CD8-positive, alpha-beta T cell (primary cell): ENCODE measurements at regions of chr12 and their contacts with region 1.

Region 1: DNA sequence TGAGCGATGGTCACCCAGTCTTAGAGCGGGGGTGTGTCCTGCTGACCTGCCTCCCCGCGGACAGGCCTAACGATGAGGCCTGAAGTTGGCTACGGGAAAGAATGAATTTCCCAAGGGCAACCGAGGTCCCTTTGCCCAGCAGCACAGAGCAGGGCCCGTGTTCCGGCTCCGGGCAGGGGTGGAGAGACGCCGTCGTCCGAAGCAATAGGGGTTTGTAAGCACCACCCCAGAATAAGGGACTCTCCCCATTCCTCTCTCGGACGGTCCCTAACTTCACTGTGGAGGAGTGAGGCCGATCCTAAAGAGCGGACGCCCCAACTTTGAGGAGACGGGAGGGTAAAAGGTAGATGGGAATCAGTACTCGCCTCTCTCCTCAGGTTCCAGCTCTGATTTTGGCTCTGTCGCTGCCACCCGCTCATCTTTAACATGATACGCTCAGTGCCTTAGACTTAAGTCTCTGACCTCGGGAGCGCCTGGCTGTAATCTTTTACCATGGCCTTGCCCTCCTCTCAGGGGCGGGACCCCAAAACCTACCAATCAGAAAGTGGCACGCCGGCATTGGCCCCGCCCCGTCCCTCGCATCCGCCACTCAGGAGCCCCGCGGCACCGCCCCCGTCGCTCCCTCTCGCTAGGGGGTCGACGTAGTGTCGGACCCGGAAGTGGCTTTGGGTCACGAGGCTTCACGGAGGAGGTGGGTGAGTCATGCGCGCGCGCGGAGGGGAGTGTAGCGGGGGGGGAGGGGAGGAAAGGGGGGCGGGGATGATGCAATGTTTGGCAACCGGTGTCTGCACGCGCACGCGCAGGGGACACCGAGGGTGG is at the start of gene DDIT3:
- DNase-seq: peak; percentile 99 to 100 (median 100)
- ATAC-seq: peak; percentile 76
- H3K4me3 ChIP-seq: peak within 1 kb of the TSS; percentile 83 to 94
- H3K4me3 Mint-ChIP-seq: peak within 1 kb of the TSS; percentile 98
- H3K27ac ChIP-seq: peak within 1 kb of the TSS; percentile 97 to 100
- H3K27ac Mint-ChIP-seq: peak within 1 kb of the TSS; percentile 100
- H3K4me1 ChIP-seq: peaks cover 53% of the 10 kb centered on the region
- H3K4me1 Mint-ChIP-seq: peaks cover 54% of the 10 kb centered on the region
- H3K27me3 ChIP-seq: no peaks in the 10 kb centered on the region
- H3K27me3 Mint-ChIP-seq: no peaks in the 10 kb centered on the region
- CTCF ChIP-seq: no peak
- total RNA-seq, gene DDIT3: 137 to 143 TPM

Region 2: GRCh38 chr12:56688129-56688845 is 832.0 kb before region 1 on chr12 and contains the start of gene PTGES3:
- CTCF ChIA-PET with region 1: no interaction called
- POLR2A ChIA-PET with region 1: no interaction called
- intact Hi-C with region 1: no loop called
- DNase-seq: peak; percentile 94 to 99 (median 97)
- ATAC-seq: peak; percentile 69
- H3K4me3 ChIP-seq: peak within 1 kb of the TSS; percentile 75 to 99
- H3K4me3 Mint-ChIP-seq: peak within 1 kb of the TSS; percentile 98
- H3K27ac ChIP-seq: peak within 1 kb of the TSS; percentile 97 to 98
- H3K27ac Mint-ChIP-seq: peak within 1 kb of the TSS; percentile 99
- H3K4me1 ChIP-seq: peaks cover 35% of the 10 kb centered on the region
- H3K4me1 Mint-ChIP-seq: peaks cover 34% of the 10 kb centered on the region
- H3K27me3 ChIP-seq: no peaks in the 10 kb centered on the region
- H3K27me3 Mint-ChIP-seq: no peaks in the 10 kb centered on the region
- CTCF ChIP-seq: no peak
- total RNA-seq, gene PTGES3: 148 to 154 TPM

Region 3: GRCh38 chr12:57088459-57089248 is 431.6 kb before region 1 on chr12 and contains the start of gene NAB2:
- CTCF ChIA-PET with region 1: no interaction called
- POLR2A ChIA-PET with region 1: no interaction called
- intact Hi-C with region 1: loop called in 1 of 2 experiments (anchors 2 kb)
- DNase-seq: peak; percentile 87 to 97 (median 95)
- ATAC-seq: peak; percentile 60
- H3K4me3 ChIP-seq: peak within 1 kb of the TSS; percentile 87 to 95
- H3K4me3 Mint-ChIP-seq: peak within 1 kb of the TSS; percentile 92
- H3K27ac ChIP-seq: peak within 1 kb of the TSS; percentile 97 to 100
- H3K27ac Mint-ChIP-seq: peak within 1 kb of the TSS; percentile 95
- H3K4me1 ChIP-seq: peaks cover 47% of the 10 kb centered on the region
- H3K4me1 Mint-ChIP-seq: peaks cover 64% of the 10 kb centered on the region
- H3K27me3 ChIP-seq: no peaks in the 10 kb centered on the region
- H3K27me3 Mint-ChIP-seq: no peaks in the 10 kb centered on the region
- CTCF ChIP-seq: no peak
- total RNA-seq, gene NAB2: 5.9 to 6.7 TPM

Region 4: GRCh38 chr12:57430931-57431720 is 89.1 kb before region 1 on chr12 and contains the start of gene R3HDM2:
- CTCF ChIA-PET with region 1: no interaction called
- POLR2A ChIA-PET with region 1: no interaction called
- intact Hi-C with region 1: loop called (anchors 1 to 2 kb)
- DNase-seq: peak; percentile 91 to 98 (median 96)
- ATAC-seq: peak; percentile 91
- H3K4me3 ChIP-seq: peak within 1 kb of the TSS; percentile 51 to 59
- H3K4me3 Mint-ChIP-seq: peak within 1 kb of the TSS; percentile 98
- H3K27ac ChIP-seq: peak within 1 kb of the TSS; percentile 87 to 96
- H3K27ac Mint-ChIP-seq: peak within 1 kb of the TSS; percentile 100
- H3K4me1 ChIP-seq: peaks cover 26% of the 10 kb centered on the region
- H3K4me1 Mint-ChIP-seq: peaks cover 45% of the 10 kb centered on the region
- H3K27me3 ChIP-seq: no peaks in the 10 kb centered on the region
- H3K27me3 Mint-ChIP-seq: no peaks in the 10 kb centered on the region
- CTCF ChIP-seq: no peak
- total RNA-seq, gene R3HDM2: 93.2 to 103 TPM

Region 5: DNA sequence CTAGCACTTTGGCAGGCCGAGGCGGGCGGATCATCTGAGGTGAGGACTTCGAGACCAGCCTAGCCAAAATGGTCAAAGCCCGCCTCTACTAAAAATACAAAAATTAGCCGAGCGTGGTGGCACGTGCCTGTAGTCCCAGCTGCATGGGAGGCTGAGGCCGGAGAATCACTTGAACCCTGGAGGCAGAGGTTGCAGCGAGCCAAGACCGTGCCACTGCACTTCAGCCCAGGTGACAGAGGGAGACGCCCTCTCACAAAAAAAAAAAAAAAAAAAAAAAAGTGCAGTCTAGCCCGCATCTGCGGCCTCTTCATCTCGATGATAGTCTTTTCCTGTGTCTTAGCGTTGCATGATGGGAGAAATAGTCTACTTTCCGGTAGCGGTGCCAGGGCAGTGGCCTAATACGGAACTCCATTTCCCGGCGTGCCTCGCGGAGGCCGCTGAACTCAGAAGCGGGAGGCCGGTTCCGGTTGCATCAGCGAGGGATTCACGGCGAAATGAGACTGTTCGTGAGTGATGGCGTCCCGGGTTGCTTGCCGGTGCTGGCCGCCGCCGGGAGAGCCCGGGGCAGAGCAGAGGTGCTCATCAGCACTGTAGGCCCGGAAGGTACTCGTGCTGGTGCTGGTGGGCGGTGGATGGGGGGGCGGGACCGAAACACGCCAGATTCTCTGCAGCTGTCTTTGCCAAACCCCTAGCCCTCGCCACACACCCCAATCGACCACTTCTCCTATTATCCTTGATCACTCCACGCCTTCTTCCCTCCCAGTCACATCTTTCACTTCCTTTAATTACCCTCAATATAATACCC is 32.5 kb before region 1 on chr12 and contains the start of gene MARS1:
- CTCF ChIA-PET with region 1: no interaction called
- POLR2A ChIA-PET with region 1: interaction called, 3 read pairs
- intact Hi-C with region 1: loop called (anchors 1 kb)
- DNase-seq: peak; percentile 78 to 98 (median 92)
- ATAC-seq: peak; percentile 94
- H3K4me3 ChIP-seq: peak within 1 kb of the TSS; percentile 66 to 85
- H3K4me3 Mint-ChIP-seq: peak within 1 kb of the TSS; percentile 93
- H3K27ac ChIP-seq: peak within 1 kb of the TSS; percentile 61 to 85
- H3K27ac Mint-ChIP-seq: peak within 1 kb of the TSS; percentile 94
- H3K4me1 ChIP-seq: peaks cover 19% of the 10 kb centered on the region
- H3K4me1 Mint-ChIP-seq: peaks cover 36% of the 10 kb centered on the region
- H3K27me3 ChIP-seq: no peaks in the 10 kb centered on the region
- H3K27me3 Mint-ChIP-seq: no peaks in the 10 kb centered on the region
- CTCF ChIP-seq: no peak
- total RNA-seq, gene MARS1: 213 to 226 TPM

Region 6: GRCh38 chr12:57498132-57498502 is 22.1 kb before region 1 on chr12:
- CTCF ChIA-PET with region 1: no interaction called
- POLR2A ChIA-PET with region 1: no interaction called
- intact Hi-C with region 1: no loop called
- DNase-seq: no peak
- ATAC-seq: no peak
- H3K4me3 ChIP-seq: no peak overlapping the region
- H3K4me3 Mint-ChIP-seq: no peak overlapping the region
- H3K27ac ChIP-seq: no peak overlapping the region
- H3K27ac Mint-ChIP-seq: peak overlapping the region; percentile 5
- H3K4me1 ChIP-seq: peaks cover 3% of the 10 kb centered on the region
- H3K4me1 Mint-ChIP-seq: no peaks in the 10 kb centered on the region
- H3K27me3 ChIP-seq: no peaks in the 10 kb centered on the region
- H3K27me3 Mint-ChIP-seq: no peaks in the 10 kb centered on the region
- CTCF ChIP-seq: no peak

Region 7: GRCh38 chr12:57621497-57622292 is 101.4 kb after region 1 on chr12:
- CTCF ChIA-PET with region 1: no interaction called
- POLR2A ChIA-PET with region 1: no interaction called
- intact Hi-C with region 1: loop called in 1 of 2 experiments (anchors 5 kb)
- DNase-seq: peak in 8 of 9 experiments; percentile 41 to 80 (median 64)
- ATAC-seq: peak; percentile 66
- H3K4me3 ChIP-seq: peak overlapping the region; percentile 45 to 52
- H3K4me3 Mint-ChIP-seq: peak overlapping the region; percentile 82
- H3K27ac ChIP-seq: no peak overlapping the region
- H3K27ac Mint-ChIP-seq: no peak overlapping the region
- H3K4me1 ChIP-seq: peaks cover 30% of the 10 kb centered on the region
- H3K4me1 Mint-ChIP-seq: peaks cover 26% of the 10 kb centered on the region
- H3K27me3 ChIP-seq: peaks cover 71 to 75% of the 10 kb centered on the region in 2 experiments
- H3K27me3 Mint-ChIP-seq: peaks cover 93% of the 10 kb centered on the region
- CTCF ChIP-seq: peak; percentile 83

Region 8: GRCh38 chr12:58547217-58547616 is 1027.0 kb after region 1 on chr12:
- CTCF ChIA-PET with region 1: no interaction called
- POLR2A ChIA-PET with region 1: no interaction called
- intact Hi-C with region 1: no loop called
- DNase-seq: no peak
- ATAC-seq: no peak
- H3K4me3 ChIP-seq: no peak overlapping the region
- H3K4me3 Mint-ChIP-seq: no peak overlapping the region
- H3K27ac ChIP-seq: no peak overlapping the region
- H3K27ac Mint-ChIP-seq: no peak overlapping the region
- H3K4me1 ChIP-seq: no peaks in the 10 kb centered on the region
- H3K4me1 Mint-ChIP-seq: no peaks in the 10 kb centered on the region
- H3K27me3 ChIP-seq: no peaks in the 10 kb centered on the region
- H3K27me3 Mint-ChIP-seq: peaks cover 2% of the 10 kb centered on the region
- CTCF ChIP-seq: no peak